Posterior cingulate gyrus (tissue), 11 donors: ENCODE measurements at regions of chr12 and their contacts with region 1.

Region 1: GRCh38 chr12:120265473-120266179 is at the start of gene PXN:
- DNase-seq: peak; percentile 61 to 97 (median 79)

Region 2: GRCh38 chr12:120093592-120094355 is 171.9 kb before region 1 on chr12:
- intact Hi-C with region 1: no loop called
- DNase-seq: peak in 6 of 10 donors; percentile 45 to 93 (median 58)

Region 3: GRCh38 chr12:120228291-120229070 is 37.1 kb before region 1 on chr12:
- intact Hi-C with region 1: loop called (anchors 1 kb)
- DNase-seq: peak; percentile 65 to 97 (median 86)

Region 4: DNA sequence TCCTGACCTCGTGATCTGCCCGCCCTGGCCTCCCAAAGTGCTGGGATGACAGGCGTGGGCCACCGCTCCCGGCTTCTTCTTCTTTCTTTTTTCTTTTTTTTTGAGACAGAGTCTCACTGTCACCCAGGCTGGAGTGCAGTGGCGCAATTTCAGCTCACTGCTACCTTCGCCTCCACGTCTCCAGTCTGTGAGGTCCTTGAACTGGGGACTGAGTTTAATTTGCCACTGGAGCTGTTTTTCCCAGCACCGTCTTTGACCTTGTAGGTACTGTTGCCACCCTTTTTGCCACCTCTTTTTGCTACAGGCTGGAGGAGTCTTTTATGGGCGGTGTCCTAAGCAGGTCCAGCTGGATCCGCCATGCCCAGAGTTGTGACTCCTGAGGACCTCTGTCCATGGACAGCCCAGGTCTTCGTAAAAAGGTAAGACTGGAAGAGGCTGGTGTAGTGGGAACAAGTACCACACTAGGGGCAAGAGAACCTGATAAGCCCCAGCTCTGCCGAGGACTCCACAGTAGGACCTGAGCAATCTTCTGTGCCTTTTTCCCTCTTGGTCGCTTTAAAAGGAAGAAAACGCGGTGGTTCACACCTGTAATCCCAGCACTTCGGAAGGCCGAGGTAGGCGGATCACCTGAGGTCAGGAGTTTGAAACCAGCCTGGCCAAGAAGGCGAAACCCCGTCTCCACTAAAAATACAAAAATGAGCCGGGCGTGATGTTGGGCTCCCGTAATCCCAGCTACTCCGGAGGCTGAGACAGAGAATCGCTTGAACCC is 25.1 kb after region 1 on chr12:
- intact Hi-C with region 1: loop called (anchors 2 kb)
- DNase-seq: peak in 1 of 10 donors; percentile 67